AG04450 (cell line): ENCODE measurements at regions of chr7 and their contacts with region 1.

Region 1: GRCh38 chr7:130896898-130897514 is 163.0 kb upstream of the KLF14 start:
- DNase-seq: no peak
- H3K4me3 ChIP-seq: no peak overlapping the region
- H3K27ac ChIP-seq: peak overlapping the region; percentile 89
- H3K27me3 ChIP-seq: no peaks in the 10 kb centered on the region
- CTCF ChIP-seq: peak; percentile 81

Region 2: GRCh38 chr7:130669085-130669700 is 227.8 kb before region 1 on chr7:
- CTCF ChIA-PET with region 1: no interaction called
- POLR2A ChIA-PET with region 1: no interaction called
- DNase-seq: no peak
- H3K4me3 ChIP-seq: peak overlapping the region; percentile 78
- H3K27ac ChIP-seq: no peak overlapping the region
- H3K27me3 ChIP-seq: no peaks in the 10 kb centered on the region
- CTCF ChIP-seq: no peak

Region 3: DNA sequence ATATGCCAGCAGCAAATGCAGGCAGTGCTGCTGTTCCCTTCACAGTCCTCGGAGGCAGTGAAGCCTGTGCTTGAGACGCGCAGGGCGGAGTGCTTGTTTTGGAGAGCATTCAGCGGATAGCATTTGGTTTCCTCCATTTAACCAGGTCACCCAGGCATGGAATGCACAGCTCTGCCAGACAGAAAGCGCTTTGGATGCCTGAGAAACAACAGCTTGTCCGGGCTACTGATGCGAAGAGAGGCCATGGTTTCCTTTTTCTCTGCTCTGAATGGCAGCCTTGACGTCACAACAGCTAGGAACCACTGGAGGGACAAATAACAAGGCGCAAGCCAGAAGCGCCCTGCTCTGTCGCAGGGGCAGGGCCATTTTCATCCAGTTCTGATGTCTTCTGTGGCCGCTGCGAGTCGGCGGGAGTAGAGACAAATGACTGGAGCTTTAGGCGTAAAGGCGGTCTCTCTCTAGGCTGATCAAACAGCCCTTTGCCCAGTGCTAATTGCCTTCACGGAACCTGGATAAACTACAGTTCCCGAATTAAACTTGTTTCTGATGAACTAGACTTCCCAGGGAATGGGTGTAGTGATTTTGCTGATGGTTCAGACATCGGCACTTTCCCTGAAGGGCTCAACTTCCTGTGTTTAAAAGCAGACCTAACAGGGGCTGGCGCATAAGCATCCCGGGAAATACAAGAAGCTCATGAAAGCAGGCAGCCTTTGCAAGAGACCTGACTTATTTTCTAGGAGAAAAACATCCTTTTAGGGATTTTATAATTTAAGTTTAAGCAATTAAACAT is 24.6 kb after region 1 on chr7:
- CTCF ChIA-PET with region 1: interaction called, 17 read pairs
- POLR2A ChIA-PET with region 1: interaction called, 3 read pairs
- DNase-seq: peak; percentile 80
- H3K4me3 ChIP-seq: peak overlapping the region; percentile 37
- H3K27ac ChIP-seq: peak overlapping the region; percentile 97
- H3K27me3 ChIP-seq: no peaks in the 10 kb centered on the region
- CTCF ChIP-seq: no peak

Region 4: DNA sequence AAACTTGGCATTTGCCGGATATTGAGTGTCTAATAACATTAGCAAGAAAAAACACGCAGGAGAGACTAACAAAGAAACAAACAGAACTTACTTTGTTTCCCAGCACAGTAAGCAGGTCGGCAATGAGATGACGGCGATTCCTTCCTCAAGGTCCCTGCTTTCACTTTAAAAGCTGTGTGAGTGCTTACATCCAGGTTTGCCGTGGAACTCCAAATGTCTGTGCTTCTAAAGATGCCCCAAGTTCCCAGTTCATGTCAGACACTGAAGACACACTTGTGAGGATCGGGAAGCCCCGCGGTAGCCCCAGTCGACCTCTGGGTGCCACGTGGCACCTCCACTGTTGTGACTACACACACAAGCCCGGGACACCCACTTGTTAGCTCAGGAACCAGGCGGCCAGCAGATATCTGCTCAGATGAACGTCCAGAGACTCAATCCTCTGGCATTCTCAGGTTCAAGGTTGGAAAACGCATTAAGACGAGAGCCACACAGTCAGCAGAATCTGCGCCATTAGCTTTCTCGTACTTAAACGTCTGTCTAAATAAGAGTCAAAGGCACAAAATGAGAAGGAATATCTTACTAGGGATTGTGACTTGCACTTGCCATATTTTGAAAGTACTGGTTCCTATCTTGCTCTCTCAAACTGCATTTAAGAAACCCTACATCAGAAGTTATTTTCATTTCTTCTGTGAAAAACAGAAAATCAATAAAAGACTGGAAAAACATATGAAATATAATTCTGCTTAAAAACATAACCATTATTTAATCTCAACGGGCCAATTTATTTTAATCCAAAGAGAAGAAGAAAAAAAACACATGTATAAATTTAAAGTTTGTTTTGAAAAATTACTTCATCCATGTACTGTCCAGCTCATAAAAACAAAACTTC is 44.6 kb after region 1 on chr7:
- CTCF ChIA-PET with region 1: interaction called, 15 read pairs
- POLR2A ChIA-PET with region 1: interaction called, 5 read pairs
- DNase-seq: no peak
- H3K4me3 ChIP-seq: peak overlapping the region; percentile 80
- H3K27ac ChIP-seq: peak overlapping the region; percentile 97
- H3K27me3 ChIP-seq: no peaks in the 10 kb centered on the region
- CTCF ChIP-seq: no peak

Region 5: GRCh38 chr7:130982160-130982638 is 85.2 kb after region 1 on chr7:
- CTCF ChIA-PET with region 1: interaction called, 19 read pairs
- POLR2A ChIA-PET with region 1: no interaction called
- DNase-seq: no peak
- H3K4me3 ChIP-seq: no peak overlapping the region
- H3K27ac ChIP-seq: no peak overlapping the region
- H3K27me3 ChIP-seq: no peaks in the 10 kb centered on the region
- CTCF ChIP-seq: peak; percentile 78

Region 6: GRCh38 chr7:131007394-131008330 is 110.7 kb after region 1 on chr7:
- CTCF ChIA-PET with region 1: interaction called, 17 read pairs
- POLR2A ChIA-PET with region 1: no interaction called
- DNase-seq: no peak
- H3K4me3 ChIP-seq: no peak overlapping the region
- H3K27ac ChIP-seq: peak overlapping the region; percentile 43
- H3K27me3 ChIP-seq: no peaks in the 10 kb centered on the region
- CTCF ChIP-seq: peak; percentile 72